Upper lobe of right lung (tissue), 1 donor: ENCODE measurements at regions of chr11 and their contacts with region 1.

Region 1: DNA sequence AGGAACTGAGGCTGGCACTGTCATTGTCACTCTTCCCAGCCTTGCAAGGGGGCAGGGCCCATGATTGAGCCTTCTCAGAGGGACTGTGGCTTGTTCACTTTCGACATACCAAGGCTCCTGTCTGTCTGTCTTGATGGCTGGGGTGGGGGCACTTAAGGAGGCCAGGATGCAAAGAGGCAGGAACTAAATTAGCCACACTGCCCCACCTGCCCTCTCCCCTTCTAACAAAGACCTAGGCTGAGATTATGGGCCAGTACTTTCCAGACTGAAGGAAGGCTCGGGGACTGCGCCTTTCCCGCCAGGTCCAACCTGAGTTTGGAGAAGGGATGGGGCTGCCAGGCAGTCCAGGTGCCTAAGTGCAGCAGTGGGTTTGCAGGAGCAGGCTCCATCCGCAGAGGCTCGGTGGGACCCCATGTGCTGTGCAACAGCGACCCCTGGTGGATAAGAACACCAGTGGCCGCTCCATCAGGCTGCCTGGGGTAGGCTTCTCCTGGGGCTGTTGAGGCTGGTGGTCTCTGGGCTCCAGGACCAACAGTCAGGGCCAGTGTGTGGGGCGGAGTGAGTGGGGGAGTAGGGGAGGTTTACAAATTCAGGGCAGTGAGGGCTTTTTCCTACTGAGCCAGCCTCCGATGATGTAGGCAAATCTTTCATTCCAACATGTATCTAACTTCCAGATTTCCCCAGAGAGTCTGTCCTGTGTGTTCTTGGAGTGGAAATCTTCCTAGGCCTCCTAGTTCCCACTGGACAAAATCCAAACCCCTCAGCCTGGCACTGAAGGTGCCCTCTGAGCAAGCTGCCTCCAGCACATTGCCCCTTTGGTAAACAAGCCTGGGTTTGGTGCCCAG is 93.9 kb downstream of the INSC start:
- DNase-seq: peak; percentile 82
- ATAC-seq: peak; percentile 92
- H3K4me3 ChIP-seq: no peak overlapping the region
- H3K27ac ChIP-seq: no peak overlapping the region
- H3K4me1 ChIP-seq: no peaks in the 10 kb centered on the region
- H3K27me3 ChIP-seq: no peaks in the 10 kb centered on the region
- CTCF ChIP-seq: peak; percentile 92

Region 2: DNA sequence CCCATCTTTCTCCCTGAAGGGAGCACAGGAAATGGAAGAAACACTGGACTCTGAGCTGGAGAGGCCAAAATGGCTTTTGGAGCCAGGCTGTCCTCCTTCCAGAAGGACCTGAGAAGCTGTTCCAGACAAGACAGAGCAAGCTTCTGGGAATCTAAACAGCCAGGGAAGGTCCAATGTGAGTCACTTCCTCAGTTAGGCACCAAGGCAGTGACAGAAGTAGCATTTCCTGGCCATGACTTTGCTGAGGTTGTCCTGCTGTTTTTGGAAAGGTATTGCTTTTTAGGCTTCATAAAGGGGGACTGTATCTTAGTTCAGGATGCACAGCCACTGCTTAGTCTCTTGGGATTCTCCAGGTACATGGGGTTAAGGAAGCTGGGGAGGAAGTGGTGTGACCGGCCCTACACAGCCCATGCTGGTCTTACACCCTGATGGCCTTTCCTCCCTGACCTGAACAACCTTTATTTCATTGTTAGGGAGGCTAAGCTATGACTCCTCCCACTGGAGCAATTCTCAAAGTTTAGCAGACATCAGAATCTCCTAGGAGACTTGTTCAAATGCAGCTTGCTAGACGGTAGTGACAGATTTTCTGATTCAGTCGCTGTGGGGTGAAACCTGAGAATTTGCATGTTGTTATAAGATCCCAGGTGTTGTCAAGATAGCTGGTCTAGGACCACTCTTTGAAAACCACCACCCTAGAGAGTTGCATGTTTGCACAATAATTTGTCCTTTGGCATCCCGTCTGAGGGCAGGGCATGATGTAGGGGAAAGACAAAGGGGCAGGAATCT is 100.7 kb before region 1 on chr11:
- intact Hi-C with region 1: loop called (anchors 5 kb)
- DNase-seq: no peak
- ATAC-seq: no peak
- H3K4me3 ChIP-seq: no peak overlapping the region
- H3K27ac ChIP-seq: no peak overlapping the region
- H3K4me1 ChIP-seq: no peaks in the 10 kb centered on the region
- H3K27me3 ChIP-seq: no peaks in the 10 kb centered on the region
- CTCF ChIP-seq: no peak